Transverse colon (tissue), 4 donors: ENCODE measurements at regions of chr1 and their contacts with region 1.

Region 1: DNA sequence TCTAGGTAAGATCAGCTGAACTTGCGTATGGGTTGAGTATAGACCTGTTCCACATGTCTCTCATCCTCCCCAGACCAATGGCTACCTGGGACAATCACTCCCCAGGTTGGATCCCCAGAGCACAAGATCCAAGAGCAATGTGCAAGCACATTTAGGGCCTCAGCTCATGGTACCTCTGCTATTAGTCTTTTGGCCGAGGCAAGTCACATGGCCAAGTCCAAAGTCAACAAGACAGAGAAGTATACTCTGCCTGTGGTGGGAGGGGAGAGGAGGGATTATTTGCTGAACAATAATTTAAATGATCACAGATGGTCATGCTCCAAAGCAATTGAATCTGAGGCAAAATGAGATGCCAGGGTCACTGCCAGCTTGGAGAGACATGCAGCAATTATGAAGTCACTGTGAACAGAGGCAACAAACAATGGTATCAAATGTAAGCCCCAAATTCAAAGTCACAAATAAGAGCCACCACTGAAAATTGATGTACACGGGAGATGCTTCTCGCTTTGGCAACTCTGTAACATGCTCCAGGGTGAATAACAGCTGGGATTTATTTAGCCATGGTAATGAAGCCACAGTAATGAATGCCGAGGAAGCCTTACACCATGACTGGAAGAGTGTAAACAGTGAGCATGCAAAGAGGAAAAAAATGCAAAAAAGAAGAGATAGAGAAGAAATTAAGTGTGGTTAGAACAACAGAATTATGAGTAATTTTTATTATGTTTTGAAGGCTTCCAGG is 149.1 kb downstream of the ZNF281 start:
- DNase-seq: no peak
- H3K4me3 ChIP-seq: no peak overlapping the region
- H3K27ac ChIP-seq: no peak overlapping the region
- H3K4me1 ChIP-seq: no peaks in the 10 kb centered on the region
- H3K27me3 ChIP-seq: no peaks in the 10 kb centered on the region
- CTCF ChIP-seq: no peak
- EP300 ChIP-seq: no peak
- POLR2A ChIP-seq: no peak

Region 2: GRCh38 chr1:200302192-200302920 is 41.6 kb after region 1 on chr1:
- in situ Hi-C with region 1: no loop called
- intact Hi-C with region 1: loop called (anchors 1 kb)
- DNase-seq: peak; percentile 51
- H3K4me3 ChIP-seq: peak overlapping the region; percentile 40 to 69 (median 48)
- H3K27ac ChIP-seq: peak overlapping the region in 3 of 4 donors; percentile 0 to 57 (median 27)
- H3K4me1 ChIP-seq: peaks cover 0 to 10% (median 6%) of the 10 kb centered on the region in 4 donors
- H3K27me3 ChIP-seq: no peaks in the 10 kb centered on the region
- CTCF ChIP-seq: no peak
- EP300 ChIP-seq: no peak
- POLR2A ChIP-seq: no peak